H1 (cell line): ENCODE measurements at regions of chr14 and their contacts with region 1.

Region 1: GRCh38 chr14:63757211-63757610 is 29.3 kb upstream of the SGPP1 start:
- DNase-seq: no peak
- H3K4me3 ChIP-seq: no peak overlapping the region
- H3K27ac ChIP-seq: no peak overlapping the region
- H3K4me1 ChIP-seq: no peaks in the 10 kb centered on the region
- H3K27me3 ChIP-seq: no peaks in the 10 kb centered on the region
- CTCF ChIP-seq: no peak
- EP300 ChIP-seq: no peak
- POLR2A ChIP-seq: no peak
- RAD21 ChIP-seq: no peak

Region 2: DNA sequence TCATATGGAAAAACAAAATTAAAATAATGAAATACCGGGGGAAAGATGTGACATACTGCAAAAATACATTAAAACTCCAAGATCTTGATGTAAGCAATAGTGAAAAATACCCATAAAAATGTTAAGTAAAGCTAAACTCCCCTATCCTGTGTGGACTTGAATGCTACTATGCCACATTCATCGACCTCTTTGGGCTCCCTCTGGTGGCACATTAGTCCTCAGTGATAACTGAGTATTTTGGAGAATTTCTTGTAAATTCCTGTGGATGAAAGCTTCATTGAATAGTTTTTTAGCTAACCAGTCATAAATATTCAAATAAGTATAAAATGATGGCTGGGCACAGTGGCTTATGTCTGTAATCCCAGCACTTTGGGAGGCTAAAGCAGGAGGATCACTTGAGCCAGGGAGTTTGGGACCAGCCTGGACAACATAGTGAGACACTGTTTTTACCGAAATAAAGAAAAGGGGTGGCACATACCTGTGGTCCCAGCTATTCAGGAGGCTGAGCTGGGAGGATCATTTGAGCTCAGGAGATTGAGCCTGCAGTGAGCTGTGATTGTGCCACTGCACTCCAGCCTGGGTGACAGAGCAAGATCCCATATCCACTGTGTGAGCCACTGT is 13.1 kb after region 1 on chr14:
- CTCF ChIA-PET with region 1: interaction called, 14 read pairs
- POLR2A ChIA-PET with region 1: no interaction called
- DNase-seq: no peak
- H3K4me3 ChIP-seq: no peak overlapping the region
- H3K27ac ChIP-seq: no peak overlapping the region
- H3K4me1 ChIP-seq: no peaks in the 10 kb centered on the region
- H3K27me3 ChIP-seq: no peaks in the 10 kb centered on the region
- CTCF ChIP-seq: peak in 2 of 3 experiments; percentile 39 to 66; a peak in 2 of 4 replicates
- EP300 ChIP-seq: no peak
- POLR2A ChIP-seq: no peak
- RAD21 ChIP-seq: peak; percentile 61 to 64

Region 3: GRCh38 chr14:63795532-63795931 is 38.3 kb after region 1 on chr14:
- CTCF ChIA-PET with region 1: no interaction called
- POLR2A ChIA-PET with region 1: no interaction called
- DNase-seq: no peak
- H3K4me3 ChIP-seq: no peak overlapping the region
- H3K27ac ChIP-seq: no peak overlapping the region
- H3K4me1 ChIP-seq: no peaks in the 10 kb centered on the region
- H3K27me3 ChIP-seq: no peaks in the 10 kb centered on the region
- CTCF ChIP-seq: no peak
- EP300 ChIP-seq: no peak
- POLR2A ChIP-seq: no peak
- RAD21 ChIP-seq: no peak

Region 4: DNA sequence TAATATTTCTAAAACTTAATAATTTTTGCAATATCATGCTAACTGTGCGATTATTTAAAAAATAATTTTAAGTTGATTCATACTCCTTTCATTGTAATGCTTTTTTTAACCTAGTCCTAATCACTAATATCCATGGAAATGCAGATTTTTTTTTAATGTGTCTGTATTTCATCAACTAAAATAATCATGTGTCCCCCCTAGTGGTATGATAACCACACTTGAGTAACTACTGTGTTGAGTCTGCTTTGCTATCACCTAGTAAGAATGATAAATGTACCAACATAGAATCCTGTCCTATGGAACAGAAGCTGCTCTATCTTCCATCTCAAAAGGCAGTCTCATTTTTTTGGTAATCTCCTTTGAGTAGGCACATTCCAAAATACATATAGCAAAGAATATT is 76.5 kb after region 1 on chr14:
- CTCF ChIA-PET with region 1: no interaction called
- POLR2A ChIA-PET with region 1: no interaction called
- DNase-seq: no peak
- H3K4me3 ChIP-seq: no peak overlapping the region
- H3K27ac ChIP-seq: no peak overlapping the region
- H3K4me1 ChIP-seq: no peaks in the 10 kb centered on the region
- H3K27me3 ChIP-seq: no peaks in the 10 kb centered on the region
- CTCF ChIP-seq: no peak
- EP300 ChIP-seq: no peak
- POLR2A ChIP-seq: no peak
- RAD21 ChIP-seq: no peak